ENCODE measurements at regions of chr14 and their contacts with region 1.

Region 1: GRCh38 chr14:71166180-71166790 is 259.0 kb downstream of the PCNX1 start:
- DNase-seq: no peak
- CTCF ChIP-seq: peak; percentile 57

Region 2: GRCh38 chr14:71290960-71291466 is 124.7 kb after region 1 on chr14:
- in situ Hi-C with region 1: loop called (anchors 10 kb)
- DNase-seq: peak; percentile 38
- CTCF ChIP-seq: no peak

Measured in GM13977 (cell line).